H1 (cell line): ENCODE measurements at regions of chr18 and their contacts with region 1.

Region 1: DNA sequence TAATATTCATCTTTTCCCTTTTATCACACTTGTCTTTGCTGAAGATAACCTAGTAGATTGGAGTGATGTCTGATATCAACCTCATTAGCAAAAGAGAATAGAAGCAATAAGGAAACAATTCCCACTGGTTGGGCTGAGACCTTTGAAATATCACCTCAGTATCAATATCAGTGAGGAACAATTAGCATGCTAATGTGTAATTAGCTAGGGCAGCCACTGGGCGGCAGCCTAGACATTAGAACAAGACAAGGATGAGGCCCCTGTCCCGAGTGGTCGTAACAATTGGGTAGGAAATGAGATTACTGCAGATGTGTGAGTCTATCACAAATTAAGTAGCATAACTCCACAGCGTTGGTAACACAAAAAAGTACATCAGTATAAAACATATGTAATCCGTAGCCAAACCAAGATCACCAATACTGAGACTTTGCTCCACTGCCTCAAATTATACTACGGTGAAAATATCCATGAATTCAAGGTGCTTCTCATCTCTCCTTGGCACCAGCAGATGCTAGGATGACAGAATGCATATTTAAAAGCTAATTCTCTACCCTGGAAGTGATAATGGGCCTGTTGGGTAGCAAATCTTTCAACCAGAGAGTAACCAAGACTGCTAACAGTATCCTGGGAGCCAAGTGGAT is 99.1 kb downstream of the ALPK2 start:
- DNase-seq: peak; percentile 25 to 78
- H3K4me3 ChIP-seq: no peak overlapping the region
- H3K27ac ChIP-seq: no peak overlapping the region
- H3K4me1 ChIP-seq: no peaks in the 10 kb centered on the region
- H3K27me3 ChIP-seq: no peaks in the 10 kb centered on the region
- CTCF ChIP-seq: peak; percentile 51 to 94 (median 87)
- EP300 ChIP-seq: no peak
- POLR2A ChIP-seq: no peak
- RAD21 ChIP-seq: peak; percentile 98 to 99

Region 2: DNA sequence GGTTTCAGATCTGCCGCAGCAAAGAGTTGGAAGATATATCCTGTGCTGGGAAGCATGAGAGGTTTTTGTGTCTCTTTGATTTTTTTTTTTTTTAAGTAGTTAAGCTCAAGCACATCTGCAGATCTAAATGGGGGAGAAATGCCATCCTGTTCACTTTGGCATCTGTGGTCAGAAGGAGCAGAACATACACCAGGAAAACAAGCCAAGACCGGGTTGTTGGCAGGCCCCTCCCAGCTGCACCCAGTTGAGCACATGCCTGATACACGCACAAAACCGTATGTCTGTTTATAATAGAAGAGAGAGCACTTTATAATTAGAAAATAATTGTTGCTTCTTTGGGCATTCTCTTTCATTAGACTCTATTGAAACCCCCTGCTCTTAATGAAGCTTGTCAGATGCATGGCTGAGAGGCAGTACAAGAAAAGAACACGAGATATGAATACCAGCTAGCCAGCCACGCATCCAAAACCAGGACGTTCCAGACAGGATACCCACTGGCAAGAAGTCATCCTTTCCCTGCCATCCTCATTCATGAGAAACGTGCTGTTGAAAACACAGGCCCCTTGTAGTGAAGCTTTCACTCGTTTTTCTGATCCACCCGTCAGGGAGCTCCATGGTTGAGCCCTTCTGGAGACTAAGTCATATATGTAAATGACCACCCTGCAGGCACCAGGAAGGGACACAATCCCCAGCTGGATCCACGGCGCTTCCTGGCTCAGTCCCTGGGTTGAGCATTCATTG is 53.1 kb before region 1 on chr18:
- CTCF ChIA-PET with region 1: no interaction called
- POLR2A ChIA-PET with region 1: no interaction called
- DNase-seq: no peak
- H3K4me3 ChIP-seq: no peak overlapping the region
- H3K27ac ChIP-seq: no peak overlapping the region
- H3K4me1 ChIP-seq: peaks cover 0 to 4% (median 0%) of the 10 kb centered on the region in 4 experiments; a peak in 1 of 7 replicates
- H3K27me3 ChIP-seq: no peaks in the 10 kb centered on the region
- CTCF ChIP-seq: no peak
- EP300 ChIP-seq: no peak
- POLR2A ChIP-seq: no peak
- RAD21 ChIP-seq: no peak

Region 3: GRCh38 chr18:58541789-58542425 is 12.1 kb after region 1 on chr18:
- CTCF ChIA-PET with region 1: interaction called, 35 read pairs
- POLR2A ChIA-PET with region 1: no interaction called
- DNase-seq: peak in 1 of 2 experiments; percentile 23
- H3K4me3 ChIP-seq: no peak overlapping the region
- H3K27ac ChIP-seq: no peak overlapping the region
- H3K4me1 ChIP-seq: peaks cover 0 to 9% (median 2%) of the 10 kb centered on the region in 4 experiments; a peak in 3 of 7 replicates
- H3K27me3 ChIP-seq: no peaks in the 10 kb centered on the region; a peak in 1 of 7 replicates
- CTCF ChIP-seq: no peak
- EP300 ChIP-seq: no peak
- POLR2A ChIP-seq: no peak
- RAD21 ChIP-seq: no peak

Region 4: DNA sequence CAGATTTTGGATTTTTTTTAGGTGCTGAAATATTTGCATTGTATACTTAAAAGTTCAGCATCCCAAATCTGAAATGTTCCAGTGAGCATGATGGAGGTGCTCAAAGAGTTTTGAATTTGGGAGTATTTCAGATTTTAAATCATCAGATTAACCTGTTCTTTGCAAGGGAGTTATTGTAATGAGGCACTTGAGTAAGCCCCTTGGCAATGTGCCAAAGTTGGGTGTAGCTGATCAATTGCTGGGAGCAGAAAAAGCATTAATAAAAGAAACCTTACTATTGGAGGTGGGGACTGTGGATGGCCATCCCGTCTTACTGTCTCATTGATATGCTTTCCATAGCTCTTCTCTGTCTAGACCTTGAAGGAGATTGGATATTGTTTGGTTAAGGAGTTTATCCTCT is 169.7 kb after region 1 on chr18:
- CTCF ChIA-PET with region 1: interaction called, 12 read pairs
- POLR2A ChIA-PET with region 1: no interaction called
- DNase-seq: no peak
- H3K4me3 ChIP-seq: no peak overlapping the region
- H3K27ac ChIP-seq: no peak overlapping the region
- H3K4me1 ChIP-seq: peaks cover 0 to 3% (median 0%) of the 10 kb centered on the region in 4 experiments; a peak in 1 of 7 replicates
- H3K27me3 ChIP-seq: no peaks in the 10 kb centered on the region
- CTCF ChIP-seq: no peak
- EP300 ChIP-seq: no peak
- POLR2A ChIP-seq: no peak
- RAD21 ChIP-seq: no peak

Region 5: DNA sequence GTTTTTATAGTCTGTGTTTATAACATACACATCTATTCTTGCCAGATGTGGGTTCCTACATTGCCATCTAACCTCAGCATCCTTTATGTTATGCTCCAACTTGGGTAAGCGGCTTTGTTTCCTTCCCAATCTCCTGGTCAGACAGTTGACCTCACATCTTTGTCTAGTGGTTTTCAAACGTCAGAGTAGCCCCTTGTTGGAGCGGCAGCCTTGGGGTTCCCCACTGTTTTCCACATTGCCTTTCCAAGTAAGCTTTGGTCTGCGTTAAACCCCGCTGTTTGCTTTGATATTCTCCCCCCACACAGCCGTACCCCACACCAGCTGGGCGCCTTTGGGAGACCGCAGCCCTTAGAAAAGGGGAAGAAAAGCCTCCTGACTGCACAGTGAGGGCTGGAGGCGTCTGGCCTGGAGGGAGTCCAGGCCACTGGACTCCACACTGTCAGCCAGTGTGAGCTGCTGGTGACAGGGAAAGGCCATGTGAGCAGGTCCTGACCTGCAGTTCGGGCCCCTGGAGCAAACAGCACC is 224.8 kb after region 1 on chr18:
- CTCF ChIA-PET with region 1: interaction called, 26 read pairs
- POLR2A ChIA-PET with region 1: no interaction called
- DNase-seq: no peak
- H3K4me3 ChIP-seq: no peak overlapping the region
- H3K27ac ChIP-seq: no peak overlapping the region
- H3K4me1 ChIP-seq: peaks cover 0 to 5% (median 0%) of the 10 kb centered on the region in 4 experiments; a peak in 5 of 7 replicates
- H3K27me3 ChIP-seq: no peaks in the 10 kb centered on the region
- CTCF ChIP-seq: no peak
- EP300 ChIP-seq: no peak
- POLR2A ChIP-seq: no peak
- RAD21 ChIP-seq: no peak